Activated T-helper 2 cell treated with anti-CD3 and anti-CD28 coated beads, Interferon-gamma antibody, Interleukin-2, Interleukin-4, amounts not matched to agents 10 μg/mL and 5 μg/mL and 100 μg/mL, durations not matched to agents 14 hours and 24 hours and 36 hours (primary cell): ENCODE measurements at regions of chr6 and their contacts with region 1.

Region 1: DNA sequence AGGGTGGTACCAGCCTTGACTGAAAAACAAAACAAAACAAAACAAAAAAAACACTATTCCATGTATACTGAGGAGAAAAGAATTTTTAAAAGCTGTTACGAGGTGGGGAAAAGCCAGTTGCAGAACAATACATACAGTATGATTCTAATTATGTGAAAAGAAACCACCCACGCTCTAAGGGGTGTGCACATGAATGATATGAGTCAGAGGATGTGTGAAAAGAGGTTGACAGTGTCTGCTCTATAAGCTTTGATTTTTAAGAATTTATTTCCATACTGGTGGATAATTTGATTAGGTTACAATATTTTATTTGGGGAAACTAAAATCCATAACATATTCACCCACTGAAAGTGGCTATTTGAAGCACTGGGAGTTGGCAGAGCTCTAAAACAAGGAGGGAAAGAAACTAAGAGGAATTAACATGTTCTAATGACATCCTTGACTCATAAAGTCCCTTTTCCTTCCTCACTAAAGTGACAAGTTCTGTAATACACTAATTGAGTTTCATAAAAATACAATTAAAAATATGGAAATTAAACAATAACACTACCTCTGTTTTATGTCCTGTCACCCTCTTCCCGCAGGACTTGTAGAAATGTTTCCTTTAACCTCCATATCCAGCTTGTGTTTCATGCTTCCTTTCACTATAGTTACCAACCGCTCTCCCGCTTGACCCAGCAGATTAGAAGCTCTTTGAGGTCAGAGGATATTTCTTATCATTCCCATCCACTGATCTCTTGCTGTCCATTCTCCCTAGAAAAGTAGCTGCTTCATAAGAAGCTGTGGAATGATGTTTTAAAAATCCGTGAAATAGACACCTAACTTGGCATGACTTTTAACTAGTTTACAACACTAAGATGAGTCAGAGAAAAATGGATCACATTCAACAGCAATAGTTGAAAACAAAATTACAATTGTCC is 118.6 kb upstream of the CCDC28A start:
- DNase-seq: no peak
- H3K4me3 Mint-ChIP-seq: peak overlapping the region; percentile 19
- H3K27ac Mint-ChIP-seq: no peak overlapping the region
- H3K4me1 Mint-ChIP-seq: peaks cover 16% of the 10 kb centered on the region
- H3K27me3 Mint-ChIP-seq: peaks cover 26% of the 10 kb centered on the region

Region 2: DNA sequence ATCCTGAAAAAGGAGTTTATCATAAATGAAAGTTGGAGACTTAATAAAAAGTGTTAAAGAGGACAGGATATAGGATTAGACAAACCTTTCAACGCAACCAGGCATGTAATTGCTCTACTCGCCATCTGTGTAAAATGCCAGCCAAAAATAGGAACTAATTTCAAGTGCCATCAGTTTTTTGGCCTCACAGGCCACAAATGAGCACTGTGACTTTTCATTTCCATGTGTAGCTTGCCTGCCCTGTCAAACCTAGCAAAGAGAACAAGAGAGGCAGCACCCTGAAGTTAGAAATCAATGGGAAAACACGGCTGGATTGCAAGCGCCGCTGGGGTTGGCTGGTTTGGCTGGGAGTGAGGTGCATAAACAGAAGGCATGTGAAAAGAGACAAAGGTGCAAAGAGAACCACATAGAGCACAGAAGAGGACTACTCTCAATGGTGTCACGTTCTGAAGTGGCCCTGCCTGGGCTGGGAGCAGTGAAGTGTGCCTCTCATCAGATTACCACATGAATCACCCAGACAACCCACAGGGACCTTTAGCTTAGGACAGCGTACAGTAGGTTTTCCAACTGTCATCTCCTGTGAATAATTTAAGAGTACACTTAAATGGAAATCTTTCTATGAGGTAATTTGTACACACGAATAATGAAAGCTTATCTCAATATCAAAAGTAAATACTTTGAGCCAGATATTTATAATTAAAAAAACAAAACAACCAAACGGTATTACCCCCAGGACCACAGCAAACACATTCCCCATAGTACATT is 77.6 kb before region 1 on chr6:
- intact Hi-C with region 1: no loop called
- DNase-seq: no peak
- H3K4me3 Mint-ChIP-seq: no peak overlapping the region
- H3K27ac Mint-ChIP-seq: no peak overlapping the region
- H3K4me1 Mint-ChIP-seq: peaks cover 12% of the 10 kb centered on the region
- H3K27me3 Mint-ChIP-seq: peaks cover 16% of the 10 kb centered on the region

Region 3: GRCh38 chr6:138692058-138692977 is 37.3 kb after region 1 on chr6:
- intact Hi-C with region 1: loop called (anchors 5 kb)
- DNase-seq: peak; percentile 45
- H3K4me3 Mint-ChIP-seq: peak overlapping the region; percentile 70
- H3K27ac Mint-ChIP-seq: no peak overlapping the region
- H3K4me1 Mint-ChIP-seq: peaks cover 9% of the 10 kb centered on the region
- H3K27me3 Mint-ChIP-seq: peaks cover 57% of the 10 kb centered on the region